Lower leg skin (tissue), 4 donors: ENCODE measurements at regions of chr13 and their contacts with region 1.

Region 1: DNA sequence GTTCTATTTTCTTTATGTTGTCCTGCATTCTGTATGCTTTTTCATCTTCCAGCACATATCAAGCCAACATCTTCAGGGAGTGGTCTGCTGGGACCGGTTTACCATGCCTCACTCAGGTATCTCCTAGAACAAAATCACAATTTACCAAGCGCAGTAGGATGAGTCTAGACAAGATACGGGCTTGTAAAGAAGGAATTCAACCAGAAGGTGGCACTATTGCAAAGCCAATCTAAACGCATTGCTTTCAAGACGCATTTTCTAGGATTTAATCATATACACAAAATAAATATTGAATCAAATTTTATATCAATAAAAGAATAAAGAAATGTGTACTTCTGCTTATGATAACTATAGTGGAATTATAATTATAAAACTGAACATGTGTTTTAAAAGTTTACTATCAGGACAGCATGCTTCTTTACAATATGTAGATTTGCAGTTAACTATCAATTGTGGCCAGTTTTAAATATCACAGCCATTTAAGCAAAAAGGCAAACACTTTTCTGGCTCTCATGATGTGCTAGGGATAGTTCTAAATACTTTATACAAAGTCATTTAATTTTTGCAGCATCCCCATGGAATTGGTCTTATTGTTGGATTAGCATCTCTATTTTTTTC is 16.1 kb upstream of the TPP2 start:
- DNase-seq: peak in 1 of 2 donors; percentile 54
- H3K4me3 ChIP-seq: no peak overlapping the region
- CTCF ChIP-seq: no peak
- POLR2A ChIP-seq: no peak

Region 2: GRCh38 chr13:101576452-101576851 is 1004.2 kb before region 1 on chr13:
- intact Hi-C with region 1: no loop called
- DNase-seq: no peak
- H3K4me3 ChIP-seq: no peak overlapping the region
- CTCF ChIP-seq: no peak
- POLR2A ChIP-seq: no peak

Region 3: DNA sequence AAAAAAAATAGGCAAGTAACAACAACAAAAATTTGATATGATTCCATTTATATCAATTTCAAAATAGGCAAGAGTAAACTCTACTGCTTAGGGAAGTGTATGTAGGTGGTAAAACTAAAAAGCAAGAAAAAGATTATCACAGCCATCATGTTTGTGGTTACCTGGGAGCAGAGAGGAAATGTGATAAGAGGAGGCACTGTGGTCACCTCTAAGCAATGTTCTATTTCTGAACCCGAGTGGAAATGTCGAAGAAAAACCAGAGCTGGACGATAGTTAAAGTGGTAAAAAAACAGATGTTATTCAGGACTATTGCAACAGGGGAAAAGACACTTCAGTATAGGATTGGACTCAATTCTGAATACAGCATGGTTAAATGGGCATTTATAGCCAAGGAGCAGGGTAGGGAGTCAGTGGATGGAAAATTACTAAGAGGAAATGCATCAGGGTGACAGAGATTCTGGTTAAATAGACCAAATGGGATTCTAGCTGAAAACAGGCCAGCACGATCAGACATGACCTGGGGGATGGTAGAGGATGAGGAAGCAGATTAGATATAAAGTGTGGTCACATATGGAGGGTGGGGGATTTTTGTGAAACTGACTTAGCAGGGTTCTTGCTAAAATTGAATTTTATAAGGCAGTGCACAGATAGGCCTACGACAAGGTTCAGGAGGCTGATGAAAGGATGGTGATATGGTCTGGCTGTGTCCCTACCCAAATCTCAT is 198.9 kb after region 1 on chr13:
- intact Hi-C with region 1: loop called (anchors 10 kb)
- DNase-seq: no peak
- H3K4me3 ChIP-seq: no peak overlapping the region
- CTCF ChIP-seq: no peak
- POLR2A ChIP-seq: no peak

Region 4: GRCh38 chr13:102854675-102855074 is 274.0 kb after region 1 on chr13:
- intact Hi-C with region 1: loop called (anchors 5 kb)
- DNase-seq: no peak
- H3K4me3 ChIP-seq: no peak overlapping the region
- CTCF ChIP-seq: no peak
- POLR2A ChIP-seq: no peak

Region 5: DNA sequence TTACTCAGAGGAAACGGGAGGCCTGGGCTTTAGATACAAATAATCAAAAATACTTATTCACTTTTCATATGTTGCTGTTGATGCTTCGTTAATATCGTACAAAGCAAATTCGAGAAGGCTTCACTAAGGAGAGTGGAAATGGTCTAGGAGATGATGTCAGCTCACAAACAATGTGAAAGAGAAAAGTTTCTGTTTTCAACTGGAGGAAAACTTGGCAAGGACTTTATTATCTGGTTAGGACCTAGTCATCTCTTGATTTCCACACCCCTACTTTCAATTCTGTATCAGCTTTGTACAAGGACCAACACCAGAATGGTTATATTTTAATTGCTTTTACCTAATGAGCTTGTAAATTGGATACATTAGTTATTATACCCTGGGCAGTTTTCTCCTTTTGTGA is 397.5 kb after region 1 on chr13:
- intact Hi-C with region 1: no loop called
- DNase-seq: no peak
- H3K4me3 ChIP-seq: no peak overlapping the region
- CTCF ChIP-seq: no peak
- POLR2A ChIP-seq: no peak